Activated CD8-positive, alpha-beta memory T cell treated with anti-CD3 and anti-CD28 coated beads, Interleukin-2, amount 10 ng/mL, durations not matched to agents 7 days and 5 days (primary cell): ENCODE measurements at regions of chr13 and their contacts with region 1.

Region 1: DNA sequence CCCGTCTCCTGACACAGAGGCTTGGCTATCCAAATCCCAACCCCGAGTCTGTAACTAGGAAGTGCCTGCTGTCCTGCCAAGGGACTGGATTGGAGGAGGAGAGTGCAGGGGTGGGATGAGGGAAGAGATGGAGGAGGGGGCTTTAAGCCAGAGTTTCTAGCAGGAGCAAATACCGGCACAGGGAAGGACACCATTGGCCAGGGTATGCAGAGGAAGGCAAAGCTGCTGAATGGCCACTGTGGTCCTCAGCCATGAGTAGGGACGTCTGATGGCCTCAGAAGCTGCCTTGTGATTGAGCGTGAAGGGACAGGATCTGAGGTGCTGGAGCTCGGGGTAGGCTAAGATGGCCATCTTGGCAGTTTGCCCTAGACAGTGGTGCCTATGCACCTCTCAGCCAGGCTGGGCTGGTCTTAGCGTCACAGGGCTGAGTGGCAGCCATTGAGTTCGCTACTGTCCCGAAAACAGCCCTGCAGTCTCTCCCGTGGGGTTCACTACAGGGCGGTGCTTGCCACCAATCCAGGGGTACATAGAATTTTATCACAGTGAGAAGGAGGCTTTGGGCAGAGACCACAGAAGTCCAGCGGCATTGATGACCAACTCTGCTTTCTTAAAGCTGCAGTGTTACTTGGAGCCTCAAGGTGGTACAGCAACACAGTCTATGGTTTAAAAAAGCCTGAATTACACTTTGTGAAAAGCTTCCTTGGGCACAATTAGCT is 61.8 kb downstream of the AKAP11 start:
- DNase-seq: no peak
- ATAC-seq: peak; percentile 74
- H3K4me3 Mint-ChIP-seq: no peak overlapping the region
- H3K27ac Mint-ChIP-seq: no peak overlapping the region
- H3K4me1 Mint-ChIP-seq: peaks cover 47% of the 10 kb centered on the region
- H3K27me3 Mint-ChIP-seq: no peaks in the 10 kb centered on the region

Region 2: GRCh38 chr13:42279080-42279479 is 54.7 kb before region 1 on chr13:
- CTCF ChIA-PET with region 1: no interaction called
- DNase-seq: no peak
- ATAC-seq: no peak
- H3K4me3 Mint-ChIP-seq: no peak overlapping the region
- H3K27ac Mint-ChIP-seq: no peak overlapping the region
- H3K4me1 Mint-ChIP-seq: peaks cover 45% of the 10 kb centered on the region
- H3K27me3 Mint-ChIP-seq: no peaks in the 10 kb centered on the region

Region 3: DNA sequence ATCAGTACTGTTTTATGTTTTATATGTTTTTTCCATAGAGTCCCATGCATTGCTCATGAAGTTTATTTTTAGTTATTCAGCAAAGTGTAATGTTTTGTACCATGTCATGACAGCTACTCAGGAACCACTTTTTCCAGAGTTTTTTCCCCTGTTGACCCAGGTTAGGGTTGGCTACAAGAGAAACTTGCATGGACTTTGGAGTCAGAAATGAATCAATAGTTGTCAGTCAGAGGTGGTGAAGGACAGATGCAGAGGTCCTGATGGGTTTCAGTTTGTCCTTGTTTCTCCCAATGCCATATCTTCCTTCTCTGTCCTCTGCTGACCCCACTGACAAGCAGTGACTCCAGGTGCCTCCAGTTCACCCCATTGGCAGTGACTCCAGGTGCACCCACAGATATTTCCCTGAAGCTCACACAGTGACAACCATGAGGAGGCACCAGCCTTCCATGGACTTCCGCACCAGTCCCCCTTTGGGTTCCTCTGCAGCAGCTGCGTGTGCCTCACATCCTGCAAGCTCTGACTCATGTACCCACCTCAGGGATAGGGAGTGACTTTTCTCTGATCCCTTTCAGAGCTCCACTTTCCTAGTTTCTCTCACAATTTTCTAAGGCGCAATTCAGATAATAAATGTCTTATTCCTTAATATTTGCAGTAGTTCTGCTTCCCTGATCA is 30.3 kb after region 1 on chr13:
- CTCF ChIA-PET with region 1: no interaction called
- DNase-seq: no peak
- ATAC-seq: no peak
- H3K4me3 Mint-ChIP-seq: no peak overlapping the region
- H3K27ac Mint-ChIP-seq: no peak overlapping the region
- H3K4me1 Mint-ChIP-seq: peaks cover 21% of the 10 kb centered on the region
- H3K27me3 Mint-ChIP-seq: no peaks in the 10 kb centered on the region

Region 4: GRCh38 chr13:42478531-42479156 is 144.9 kb after region 1 on chr13:
- CTCF ChIA-PET with region 1: interaction called, 29 read pairs
- DNase-seq: no peak
- ATAC-seq: peak; percentile 51
- H3K4me3 Mint-ChIP-seq: no peak overlapping the region
- H3K27ac Mint-ChIP-seq: no peak overlapping the region
- H3K4me1 Mint-ChIP-seq: peaks cover 6% of the 10 kb centered on the region
- H3K27me3 Mint-ChIP-seq: no peaks in the 10 kb centered on the region